A549 (cell line): ENCODE measurements at regions of chr3 and their contacts with region 1.

Region 1: DNA sequence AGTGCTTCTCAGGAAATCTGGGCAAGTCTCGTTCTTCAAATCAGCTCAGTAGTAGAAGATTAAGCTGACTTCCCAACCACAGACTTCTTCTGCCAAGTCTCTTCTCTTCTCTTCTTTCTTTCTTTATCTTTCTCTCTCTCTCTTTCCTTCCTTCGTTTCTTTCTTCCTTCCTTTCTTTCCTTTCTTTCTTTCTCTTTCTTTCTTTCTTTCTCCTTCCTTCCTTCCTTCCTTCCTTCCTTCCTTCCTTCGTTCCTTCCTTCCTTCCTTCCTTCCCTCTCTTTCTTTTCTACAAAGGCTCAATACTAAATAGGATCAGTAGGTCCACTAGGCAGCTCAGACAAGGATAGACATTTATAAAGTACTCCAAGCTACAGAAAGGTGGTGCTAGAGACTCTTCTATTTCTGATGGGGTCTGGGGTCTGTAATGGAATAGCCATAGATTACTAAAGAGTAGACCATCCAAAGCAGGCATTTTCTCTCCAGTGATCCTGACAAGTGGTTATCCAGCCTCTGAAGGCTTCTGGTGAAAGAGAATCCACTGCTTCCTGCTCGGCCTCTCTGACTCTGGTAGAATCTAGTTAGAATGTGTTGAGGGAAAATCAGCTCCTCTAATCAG is 100.8 kb downstream of the TPRG1 start:
- DNase-seq: peak; percentile 3 to 47
- ATAC-seq: peak in 1 of 2 experiments; percentile 70; a peak in 3 of 6 replicates
- H3K4me3 ChIP-seq: no peak overlapping the region
- H3K27ac ChIP-seq: peak overlapping the region; percentile 51 to 85; a peak in 4 of 6 replicates
- H3K4me1 ChIP-seq: peaks cover 37% of the 10 kb centered on the region
- CTCF ChIP-seq: peak; percentile 32
- EP300 ChIP-seq: no peak
- POLR2A ChIP-seq: no peak
- RAD21 ChIP-seq: peak; percentile 56 to 61

Region 2: GRCh38 chr3:188683032-188683521 is 589.5 kb before region 1 on chr3:
- CTCF ChIA-PET with region 1: no interaction called
- POLR2A ChIA-PET with region 1: no interaction called
- DNase-seq: no peak
- ATAC-seq: peak; percentile 57 to 73; a peak in 5 of 6 replicates
- H3K4me3 ChIP-seq: no peak overlapping the region
- H3K27ac ChIP-seq: peak overlapping the region; percentile 1 to 27; a peak in 2 of 6 replicates
- H3K4me1 ChIP-seq: peaks cover 21% of the 10 kb centered on the region; the same call in 2 of the 3 replicates
- CTCF ChIP-seq: no peak
- EP300 ChIP-seq: no peak
- POLR2A ChIP-seq: no peak
- RAD21 ChIP-seq: no peak

Region 3: GRCh38 chr3:189674249-189674913 is 401.8 kb after region 1 on chr3:
- CTCF ChIA-PET with region 1: interaction called, 10 read pairs
- POLR2A ChIA-PET with region 1: no interaction called
- DNase-seq: no peak
- ATAC-seq: peak in 1 of 2 experiments; percentile 71; a peak in 3 of 6 replicates
- H3K4me3 ChIP-seq: no peak overlapping the region
- H3K27ac ChIP-seq: peak overlapping the region; percentile 48 to 65
- H3K4me1 ChIP-seq: peaks cover 18% of the 10 kb centered on the region; the same call in 2 of the 3 replicates
- CTCF ChIP-seq: no peak
- EP300 ChIP-seq: no peak
- POLR2A ChIP-seq: no peak
- RAD21 ChIP-seq: no peak